ENCODE measurements at regions of chr9 and their contacts with region 1.

Region 1: GRCh38 chr9:3441197-3441816 is 84.5 kb downstream of the RFX3 start:
- DNase-seq: peak; percentile 18
- H3K4me3 Mint-ChIP-seq: no peak overlapping the region
- H3K27ac Mint-ChIP-seq: no peak overlapping the region
- H3K4me1 Mint-ChIP-seq: no peaks in the 10 kb centered on the region
- H3K27me3 Mint-ChIP-seq: peaks cover 2% of the 10 kb centered on the region

Region 2: DNA sequence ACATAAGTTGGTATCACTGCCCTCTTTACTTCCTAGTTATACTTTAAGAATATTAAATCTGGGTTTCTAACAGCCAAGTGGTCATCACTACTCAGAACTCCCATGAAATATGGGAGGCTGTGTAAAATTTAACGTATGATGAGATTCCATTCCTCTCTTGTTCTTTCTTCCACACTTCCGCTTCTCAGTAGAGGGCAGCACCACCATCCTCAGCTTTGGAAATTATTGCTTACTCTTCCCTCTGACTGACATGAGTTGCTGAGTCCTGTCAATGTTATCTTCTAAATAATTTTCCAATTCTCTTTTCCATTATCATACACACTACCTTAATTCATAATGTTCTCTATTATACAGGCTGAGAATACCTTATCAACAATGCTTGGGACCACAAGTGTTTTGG is 109.5 kb before region 1 on chr9:
- intact Hi-C with region 1: loop called (anchors 1 kb)
- DNase-seq: no peak
- H3K4me3 Mint-ChIP-seq: no peak overlapping the region
- H3K27ac Mint-ChIP-seq: no peak overlapping the region
- H3K4me1 Mint-ChIP-seq: no peaks in the 10 kb centered on the region
- H3K27me3 Mint-ChIP-seq: no peaks in the 10 kb centered on the region

Region 3: GRCh38 chr9:3455717-3456116 is 14.4 kb after region 1 on chr9:
- intact Hi-C with region 1: no loop called
- DNase-seq: no peak
- H3K4me3 Mint-ChIP-seq: no peak overlapping the region
- H3K27ac Mint-ChIP-seq: no peak overlapping the region
- H3K4me1 Mint-ChIP-seq: no peaks in the 10 kb centered on the region
- H3K27me3 Mint-ChIP-seq: no peaks in the 10 kb centered on the region

Region 4: DNA sequence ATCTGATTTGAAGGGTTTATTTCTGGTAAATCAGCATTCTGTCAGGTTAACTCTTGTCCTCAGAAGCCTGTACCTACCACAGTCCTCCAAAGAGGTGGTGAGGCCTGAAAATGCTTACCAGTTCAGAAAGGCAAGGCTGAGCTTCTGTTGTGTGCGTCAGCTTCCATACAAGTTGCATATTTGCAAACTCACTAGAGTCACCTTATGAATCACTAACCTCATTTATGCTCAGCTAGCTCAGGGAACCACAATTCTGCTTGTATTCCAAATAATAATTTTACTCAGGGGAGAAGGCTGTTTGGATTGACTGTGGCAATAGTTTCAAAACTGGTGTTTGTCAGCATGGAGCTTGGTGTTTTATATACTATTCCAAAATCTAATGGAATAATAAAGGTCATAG is 439.5 kb after region 1 on chr9:
- intact Hi-C with region 1: no loop called
- DNase-seq: no peak
- H3K4me3 Mint-ChIP-seq: no peak overlapping the region
- H3K27ac Mint-ChIP-seq: no peak overlapping the region
- H3K4me1 Mint-ChIP-seq: no peaks in the 10 kb centered on the region
- H3K27me3 Mint-ChIP-seq: no peaks in the 10 kb centered on the region

Measured in activated T-helper 1 cell treated with anti-CD3 and anti-CD28 coated beads, Interleukin-12 subunit alpha, Interleukin-12 subunit beta, Interleukin-2, Interleukin-4 antibody, amounts not matched to agents 30 ng/mL and 10 ng/mL and 1 ng/mL, durations not matched to agents 14 hours and 24 hours and 36 hours (primary cell).